Tibial artery (tissue), 4 donors: ENCODE measurements at regions of chr5 and their contacts with region 1.

Region 1: DNA sequence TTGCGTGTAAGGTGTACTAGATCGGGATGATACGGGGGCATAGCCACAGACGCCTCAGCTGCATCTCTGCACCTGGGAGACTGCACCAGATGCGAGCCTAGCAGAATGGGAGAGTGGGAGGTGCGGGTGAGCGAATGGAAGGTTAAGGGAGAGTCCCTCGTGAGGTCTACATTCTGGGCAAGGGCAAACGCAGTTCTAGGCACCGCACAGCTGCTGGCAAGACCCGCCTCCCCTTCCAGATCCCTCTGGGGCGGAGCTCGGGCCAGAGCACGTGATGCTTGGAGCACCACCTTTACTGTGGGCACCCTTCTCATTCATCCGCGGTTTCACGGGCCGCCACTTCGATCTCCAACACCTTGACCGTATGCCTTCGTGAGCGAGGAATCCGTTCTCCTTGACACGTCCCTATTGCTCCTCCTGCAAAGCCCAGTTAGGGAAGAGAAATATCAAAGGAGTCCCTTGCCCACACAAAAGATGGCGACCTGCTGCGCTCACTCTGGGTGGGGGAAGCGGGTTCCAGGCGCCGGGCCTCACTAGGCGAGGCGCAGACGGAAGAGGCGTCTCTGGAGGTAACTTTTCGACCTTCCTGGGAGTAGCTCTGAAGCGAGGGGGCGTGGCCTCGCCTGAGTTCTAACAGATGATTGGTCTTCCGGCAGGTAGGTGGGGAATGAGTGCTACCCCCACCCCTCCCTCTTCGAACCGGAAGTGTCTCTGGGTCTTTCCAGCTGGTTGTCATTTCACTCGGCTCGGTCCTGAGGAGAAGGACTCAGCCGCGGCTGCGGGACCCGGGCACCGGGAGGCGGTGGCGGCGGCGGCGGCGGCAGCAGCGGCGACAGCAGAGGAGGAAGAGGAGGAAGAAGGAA is at the start of gene CPEB4:
- DNase-seq: peak; percentile 99 to 100
- H3K4me3 ChIP-seq: peak within 1 kb of the TSS; percentile 77 to 93
- H3K27ac ChIP-seq: peak within 1 kb of the TSS; percentile 82 to 89
- H3K4me1 ChIP-seq: peaks cover 0 to 25% (median 9%) of the 10 kb centered on the region in 4 donors
- H3K27me3 ChIP-seq: no peaks in the 10 kb centered on the region
- CTCF ChIP-seq: no peak

Region 2: GRCh38 chr5:173615884-173616576 is 271.8 kb before region 1 on chr5:
- intact Hi-C with region 1: loop called (anchors 5 kb)
- DNase-seq: peak; percentile 49 to 74
- H3K4me3 ChIP-seq: peak overlapping the region; percentile 85 to 91
- H3K27ac ChIP-seq: peak overlapping the region; percentile 94 to 99
- H3K4me1 ChIP-seq: peaks cover 0 to 38% (median 24%) of the 10 kb centered on the region in 4 donors
- H3K27me3 ChIP-seq: no peaks in the 10 kb centered on the region
- CTCF ChIP-seq: peak; percentile 58 to 67

Region 3: DNA sequence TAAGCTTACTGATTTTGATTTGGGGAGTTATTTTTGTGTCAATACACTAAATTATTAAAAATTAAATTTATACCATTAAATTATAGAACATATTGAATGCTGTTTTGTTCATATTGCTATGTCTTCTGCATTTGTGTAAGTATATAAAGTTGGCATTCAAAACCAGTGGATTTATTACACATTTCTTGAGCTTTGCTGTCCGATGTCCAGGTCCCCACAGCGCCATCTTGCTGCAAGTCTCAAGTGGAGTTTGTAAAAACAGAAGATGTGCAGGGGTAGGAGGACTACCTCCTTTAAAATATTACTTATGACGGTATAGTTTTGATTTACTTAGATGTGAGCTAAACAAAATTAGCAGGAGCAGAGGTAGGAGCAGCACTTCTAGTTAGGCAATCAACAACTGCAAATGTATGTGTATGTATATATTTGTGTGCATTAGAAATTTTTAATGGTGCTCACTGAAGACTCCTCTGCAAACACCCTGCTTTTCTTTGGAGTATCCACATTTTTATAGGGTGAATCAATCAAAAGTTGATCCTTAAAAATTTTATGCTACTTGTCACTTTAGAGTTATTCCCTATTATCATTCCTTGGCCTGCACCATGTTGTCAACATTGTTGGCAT is 37.7 kb after region 1 on chr5:
- intact Hi-C with region 1: loop called (anchors 5 kb)
- DNase-seq: peak in 1 of 2 donors; percentile 35
- H3K4me3 ChIP-seq: no peak overlapping the region
- H3K27ac ChIP-seq: peak overlapping the region; percentile 81 to 82
- H3K4me1 ChIP-seq: peaks cover 0 to 75% (median 66%) of the 10 kb centered on the region in 4 donors
- H3K27me3 ChIP-seq: no peaks in the 10 kb centered on the region
- CTCF ChIP-seq: peak in 1 of 2 experiments; percentile 19